IMR-90 (cell line): ENCODE measurements at regions of chr1 and their contacts with region 1.

Region 1: GRCh38 chr1:55277377-55278130 is 62.4 kb upstream of the USP24 start:
- DNase-seq: peak; percentile 78
- ATAC-seq: peak; percentile 93
- H3K4me3 ChIP-seq: no peak overlapping the region
- H3K27ac ChIP-seq: no peak overlapping the region
- H3K4me1 ChIP-seq: peaks cover 6% of the 10 kb centered on the region; the same call in 1 of the 2 replicates
- H3K27me3 ChIP-seq: no peaks in the 10 kb centered on the region
- CTCF ChIP-seq: peak; percentile 82
- POLR2A ChIP-seq: no peak
- RAD21 ChIP-seq: peak; percentile 87

Region 2: DNA sequence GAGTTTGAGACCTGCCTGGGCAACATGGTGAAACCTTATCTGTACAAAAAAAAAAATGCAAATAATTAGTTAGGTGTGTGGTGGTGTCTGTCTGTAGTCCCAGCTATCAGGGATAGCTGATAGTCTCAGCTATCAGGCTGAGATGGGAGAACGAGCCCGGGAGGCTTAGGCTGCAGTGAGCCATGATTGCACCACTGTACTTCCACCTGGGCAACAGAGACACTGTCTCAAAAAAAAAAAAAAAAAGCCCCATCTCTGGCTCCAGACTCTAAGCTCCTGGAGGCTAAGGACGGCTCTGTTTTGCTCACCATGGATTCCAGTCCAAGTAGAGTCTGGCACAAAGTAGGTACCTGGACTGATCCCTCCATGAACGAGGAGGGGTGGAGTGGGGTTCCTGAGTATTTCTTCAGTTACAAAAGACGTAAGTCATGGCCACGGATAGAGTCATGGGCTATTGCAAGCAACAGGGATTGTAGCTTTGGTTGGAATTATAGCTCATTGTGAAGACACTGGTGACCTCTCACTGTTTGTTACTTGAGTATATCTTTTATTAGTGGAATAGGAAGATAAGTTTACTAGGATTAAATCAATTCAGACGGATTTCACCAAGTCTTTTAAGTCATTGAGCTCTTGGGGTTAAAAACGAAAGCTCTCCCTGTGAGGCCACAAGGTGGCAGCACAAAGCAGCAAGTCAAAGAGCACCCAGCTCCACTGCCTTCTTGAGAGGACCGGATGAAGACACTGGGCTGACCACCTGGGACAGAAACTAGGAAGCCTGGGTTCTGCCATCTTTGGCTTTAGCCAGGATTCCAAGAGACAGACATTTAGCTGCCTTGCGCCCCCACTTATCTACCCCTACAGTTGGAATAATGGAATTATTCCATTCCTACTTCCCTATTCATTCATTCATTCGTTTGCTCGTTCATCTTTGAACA is 332.7 kb before region 1 on chr1:
- CTCF ChIA-PET with region 1: interaction called, 3 read pairs
- POLR2A ChIA-PET with region 1: no interaction called
- dilution Hi-C with region 1: no loop called
- in situ Hi-C with region 1: no loop called
- intact Hi-C with region 1: loop called (anchors 2 kb)
- DNase-seq: peak; percentile 85
- ATAC-seq: peak; percentile 94
- H3K4me3 ChIP-seq: no peak overlapping the region
- H3K27ac ChIP-seq: no peak overlapping the region
- H3K4me1 ChIP-seq: no peaks in the 10 kb centered on the region
- H3K27me3 ChIP-seq: no peaks in the 10 kb centered on the region; the same call in 1 of the 2 replicates
- CTCF ChIP-seq: peak; percentile 79
- POLR2A ChIP-seq: no peak
- RAD21 ChIP-seq: peak; percentile 80

Region 3: DNA sequence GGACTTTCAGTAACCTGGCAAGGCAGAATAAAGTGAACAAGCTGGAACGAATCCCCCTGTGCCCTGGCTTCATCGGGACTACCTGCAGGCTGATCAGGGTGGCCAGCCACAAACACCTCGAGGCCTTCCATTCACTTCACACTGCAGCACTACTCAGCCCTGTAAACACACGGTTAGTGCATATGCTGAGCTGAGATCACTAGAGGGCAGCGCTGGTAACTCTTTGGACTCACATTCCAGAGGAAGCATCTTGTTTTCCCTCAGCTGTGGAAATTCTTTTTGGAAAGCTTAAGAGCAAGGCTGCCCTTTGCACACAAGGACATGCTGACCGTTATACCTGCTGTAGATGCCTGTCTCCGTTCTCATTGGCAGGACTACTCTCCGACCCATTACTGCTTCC is 206.1 kb before region 1 on chr1:
- CTCF ChIA-PET with region 1: interaction called, 4 read pairs
- POLR2A ChIA-PET with region 1: no interaction called
- dilution Hi-C with region 1: no loop called
- in situ Hi-C with region 1: no loop called
- intact Hi-C with region 1: loop called (anchors 1 kb)
- DNase-seq: peak; percentile 70
- ATAC-seq: peak; percentile 100
- H3K4me3 ChIP-seq: no peak overlapping the region
- H3K27ac ChIP-seq: no peak overlapping the region
- H3K4me1 ChIP-seq: no peaks in the 10 kb centered on the region
- H3K27me3 ChIP-seq: no peaks in the 10 kb centered on the region
- CTCF ChIP-seq: peak; percentile 59
- POLR2A ChIP-seq: no peak
- RAD21 ChIP-seq: peak; percentile 42

Region 4: GRCh38 chr1:55140546-55140983 is 137.0 kb before region 1 on chr1:
- CTCF ChIA-PET with region 1: interaction called, 19 read pairs
- POLR2A ChIA-PET with region 1: interaction called, 6 read pairs
- dilution Hi-C with region 1: no loop called
- in situ Hi-C with region 1: loop called (anchors 5 kb)
- intact Hi-C with region 1: loop called (anchors 1 kb)
- DNase-seq: peak; percentile 91
- ATAC-seq: peak; percentile 100
- H3K4me3 ChIP-seq: no peak overlapping the region
- H3K27ac ChIP-seq: no peak overlapping the region
- H3K4me1 ChIP-seq: no peaks in the 10 kb centered on the region
- H3K27me3 ChIP-seq: no peaks in the 10 kb centered on the region
- CTCF ChIP-seq: peak; percentile 89
- POLR2A ChIP-seq: 0 out of 2 replicates have a peak, but pooled peaks have one; percentile 38
- RAD21 ChIP-seq: peak; percentile 89

Region 5: GRCh38 chr1:55164906-55165305 is 112.6 kb before region 1 on chr1:
- CTCF ChIA-PET with region 1: no interaction called
- POLR2A ChIA-PET with region 1: no interaction called
- dilution Hi-C with region 1: no loop called
- in situ Hi-C with region 1: no loop called
- intact Hi-C with region 1: loop called (anchors 5 kb)
- DNase-seq: no peak
- ATAC-seq: no peak
- H3K4me3 ChIP-seq: no peak overlapping the region
- H3K27ac ChIP-seq: no peak overlapping the region
- H3K4me1 ChIP-seq: no peaks in the 10 kb centered on the region; the same call in 1 of the 2 replicates
- H3K27me3 ChIP-seq: no peaks in the 10 kb centered on the region
- CTCF ChIP-seq: no peak
- POLR2A ChIP-seq: no peak
- RAD21 ChIP-seq: no peak

Region 6: GRCh38 chr1:55215256-55216021 is 62.1 kb before region 1 on chr1 and contains the start of gene USP24:
- CTCF ChIA-PET with region 1: interaction called, 3 read pairs
- POLR2A ChIA-PET with region 1: no interaction called
- dilution Hi-C with region 1: no loop called
- in situ Hi-C with region 1: no loop called
- intact Hi-C with region 1: loop called (anchors 2 kb)
- DNase-seq: peak; percentile 59
- ATAC-seq: peak; percentile 90
- H3K4me3 ChIP-seq: peak within 1 kb of the TSS; percentile 99
- H3K27ac ChIP-seq: peak within 1 kb of the TSS; percentile 99
- H3K4me1 ChIP-seq: peaks cover 6% of the 10 kb centered on the region; the same call in 1 of the 2 replicates
- H3K27me3 ChIP-seq: no peaks in the 10 kb centered on the region
- CTCF ChIP-seq: no peak
- POLR2A ChIP-seq: peak; percentile 80
- RAD21 ChIP-seq: no peak
- total RNA-seq, gene USP24: 34.7 and 36.7 TPM in 2 replicates

Region 7: DNA sequence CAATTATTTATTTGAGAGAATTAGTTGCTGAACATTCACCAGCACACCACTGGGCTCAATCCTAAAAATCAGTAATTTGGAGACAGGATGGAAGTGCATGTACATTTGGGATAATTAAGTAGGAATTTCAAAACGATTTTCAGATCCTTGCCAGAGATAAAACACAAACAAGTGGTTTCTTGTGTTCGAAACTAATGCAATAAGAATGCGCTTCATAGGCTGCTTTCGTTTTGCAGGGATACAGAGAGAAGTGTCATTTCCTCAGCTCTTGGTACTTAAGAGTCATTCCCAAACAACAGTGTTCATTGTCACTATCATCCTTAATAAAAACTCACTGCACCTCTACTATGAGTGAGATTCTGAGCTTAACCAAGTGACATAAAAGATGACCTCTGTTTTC is 41.8 kb before region 1 on chr1:
- CTCF ChIA-PET with region 1: no interaction called
- POLR2A ChIA-PET with region 1: no interaction called
- dilution Hi-C with region 1: no loop called
- in situ Hi-C with region 1: no loop called
- intact Hi-C with region 1: no loop called
- DNase-seq: peak; percentile 85
- ATAC-seq: peak; percentile 82
- H3K4me3 ChIP-seq: no peak overlapping the region
- H3K27ac ChIP-seq: no peak overlapping the region
- H3K4me1 ChIP-seq: peaks cover 4% of the 10 kb centered on the region
- H3K27me3 ChIP-seq: no peaks in the 10 kb centered on the region; the same call in 1 of the 2 replicates
- CTCF ChIP-seq: no peak
- POLR2A ChIP-seq: no peak
- RAD21 ChIP-seq: no peak

Region 8: DNA sequence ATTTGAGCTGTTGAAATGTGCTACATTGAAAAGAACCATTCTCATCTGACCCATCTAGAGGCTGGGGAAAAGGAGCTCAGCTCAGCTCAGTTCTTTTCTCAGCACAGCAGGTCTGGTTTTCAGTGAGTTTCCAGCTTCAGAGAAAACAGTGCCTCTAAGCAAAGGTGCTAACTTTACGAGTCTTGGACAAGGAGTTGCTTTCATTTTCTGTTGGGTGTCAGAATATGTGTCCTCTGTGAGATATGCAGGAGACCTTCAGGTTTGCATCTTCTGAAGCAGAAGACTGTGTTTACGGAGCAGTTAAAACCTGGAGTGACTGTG is 259.0 kb after region 1 on chr1:
- CTCF ChIA-PET with region 1: no interaction called
- POLR2A ChIA-PET with region 1: no interaction called
- dilution Hi-C with region 1: no loop called
- in situ Hi-C with region 1: no loop called
- intact Hi-C with region 1: no loop called
- DNase-seq: no peak
- ATAC-seq: no peak
- H3K4me3 ChIP-seq: no peak overlapping the region
- H3K27ac ChIP-seq: peak overlapping the region; percentile 49; the same call in 1 of the 2 replicates
- H3K4me1 ChIP-seq: 0 out of 2 replicates have a peak, but pooled peaks cover 2% of the 10 kb centered on the region
- H3K27me3 ChIP-seq: no peaks in the 10 kb centered on the region
- CTCF ChIP-seq: no peak
- POLR2A ChIP-seq: no peak
- RAD21 ChIP-seq: no peak